Activated T-helper 1 cell treated with anti-CD3 and anti-CD28 coated beads, Interleukin-12 subunit alpha, Interleukin-12 subunit beta, Interleukin-2, Interleukin-4 antibody, amounts not matched to agents 30 ng/mL and 10 ng/mL and 1 ng/mL, durations not matched to agents 14 hours and 24 hours and 36 hours (primary cell): ENCODE measurements at regions of chr14 and their contacts with region 1.

Region 1: GRCh38 chr14:55026793-55027561 is at the starts of genes SOCS4 and WDHD1:
- DNase-seq: peak; percentile 98
- H3K4me3 Mint-ChIP-seq: peak within 1 kb of the TSS; percentile 88
- H3K27ac Mint-ChIP-seq: peak within 1 kb of the TSS; percentile 86
- H3K4me1 Mint-ChIP-seq: peaks cover 63% of the 10 kb centered on the region
- H3K27me3 Mint-ChIP-seq: no peaks in the 10 kb centered on the region
- total RNA-seq, gene SOCS4: 40.5 and 42.3 TPM in 2 replicates
- total RNA-seq, gene WDHD1: 53.8 and 54.1 TPM in 2 replicates

Region 2: DNA sequence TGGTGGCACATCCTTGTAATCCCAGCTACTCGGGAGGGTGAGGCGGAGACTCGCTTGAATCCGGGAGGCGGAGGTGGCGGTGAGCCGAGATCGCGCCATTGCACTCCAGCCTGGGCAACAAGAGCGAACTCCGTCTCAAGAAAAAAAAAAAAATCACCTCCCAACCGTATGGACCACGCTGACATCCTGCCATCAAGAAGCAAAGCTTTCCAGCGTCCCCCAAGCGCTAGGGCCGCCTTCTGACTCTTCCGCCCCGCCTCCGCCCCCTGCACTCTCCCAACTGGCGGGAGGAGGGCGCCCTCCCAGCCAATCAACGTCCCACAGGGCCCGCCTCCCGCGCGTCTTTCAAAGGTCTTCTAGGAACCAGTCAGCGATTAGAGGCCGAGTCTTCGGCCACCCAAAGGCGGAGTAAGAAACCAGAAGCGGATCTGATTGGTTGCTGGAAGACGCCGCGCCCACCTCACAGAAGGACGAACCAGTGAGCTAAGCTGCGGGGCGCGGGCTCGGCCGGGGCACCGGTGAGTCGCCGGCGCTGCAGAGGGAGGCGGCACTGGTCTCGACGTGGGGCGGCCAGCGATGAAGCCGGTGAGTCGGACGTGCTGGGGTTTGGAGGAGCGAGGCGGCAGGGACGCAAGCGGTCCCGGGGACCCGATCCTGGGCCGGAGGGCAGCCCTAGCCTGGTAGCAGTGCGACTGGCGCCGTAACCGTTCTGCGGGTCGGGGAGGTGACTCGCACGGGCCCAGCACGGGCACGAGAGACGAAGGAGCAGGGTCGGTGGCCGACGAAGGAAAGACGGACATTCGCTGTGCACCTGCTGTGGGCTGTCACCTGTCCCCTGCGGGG is 630.3 kb before region 1 on chr14 and contains the start of gene CDKN3:
- intact Hi-C with region 1: loop called (anchors 1 kb)
- DNase-seq: peak; percentile 98
- H3K4me3 Mint-ChIP-seq: peak within 1 kb of the TSS; percentile 81
- H3K27ac Mint-ChIP-seq: peak within 1 kb of the TSS; percentile 85
- H3K4me1 Mint-ChIP-seq: peaks cover 16% of the 10 kb centered on the region
- H3K27me3 Mint-ChIP-seq: peaks cover 3% of the 10 kb centered on the region
- total RNA-seq, gene CDKN3: 36.5 and 39.2 TPM in 2 replicates

Region 3: DNA sequence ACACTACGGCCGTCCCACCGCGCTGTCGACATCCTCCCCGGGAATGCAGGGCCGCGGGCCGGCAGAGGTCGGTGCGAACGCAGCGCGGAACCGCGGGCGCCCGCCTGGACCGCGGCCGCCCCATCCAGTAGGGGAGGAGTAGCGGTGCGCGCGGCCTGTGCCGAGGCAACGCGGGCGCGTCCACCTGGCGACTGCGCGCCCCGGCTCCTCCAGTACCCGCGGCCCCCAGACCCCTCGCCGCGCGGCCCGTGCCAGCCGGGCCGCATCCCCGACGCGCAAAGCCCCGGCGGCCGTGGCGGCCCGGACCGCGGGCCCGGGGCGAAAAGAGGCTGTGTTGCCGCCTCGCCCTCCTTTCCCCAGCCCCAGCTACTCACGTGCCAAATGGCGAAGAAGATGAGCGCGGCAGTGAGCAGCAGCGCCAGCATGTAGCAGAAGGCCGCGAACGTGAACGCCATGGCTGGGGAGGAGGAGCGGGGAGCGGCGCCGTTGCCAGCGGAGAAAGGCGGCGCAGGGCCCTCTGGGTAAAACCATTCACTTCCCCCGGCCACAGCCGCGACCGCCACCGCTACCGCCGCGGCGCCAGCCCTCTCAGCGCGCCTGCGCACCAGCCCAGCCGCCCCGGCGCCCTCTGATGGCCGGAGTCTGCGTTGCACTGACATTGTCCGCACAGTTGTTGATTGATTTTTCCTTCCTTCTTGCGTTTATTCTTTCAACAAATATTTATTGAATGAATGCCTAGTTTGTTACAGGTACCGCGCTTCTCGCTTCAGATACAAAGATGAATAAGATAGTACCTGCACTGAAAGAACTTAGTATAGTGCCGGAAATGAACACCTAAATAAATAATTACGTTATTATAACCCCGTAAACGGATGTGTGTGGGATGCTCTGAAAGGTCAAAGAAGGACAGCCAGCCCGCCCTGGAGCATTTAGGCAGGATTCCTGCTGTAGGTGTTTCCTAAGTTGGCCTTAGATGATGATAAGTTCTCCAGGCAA is 585.8 kb before region 1 on chr14 and contains the start of gene CNIH1:
- intact Hi-C with region 1: loop called (anchors 5 kb)
- DNase-seq: peak; percentile 91
- H3K4me3 Mint-ChIP-seq: peak within 1 kb of the TSS; percentile 89
- H3K27ac Mint-ChIP-seq: peak within 1 kb of the TSS; percentile 93
- H3K4me1 Mint-ChIP-seq: peaks cover 45% of the 10 kb centered on the region
- H3K27me3 Mint-ChIP-seq: peaks cover 2% of the 10 kb centered on the region
- total RNA-seq, gene CNIH1: 105 and 109 TPM in 2 replicates

Region 4: DNA sequence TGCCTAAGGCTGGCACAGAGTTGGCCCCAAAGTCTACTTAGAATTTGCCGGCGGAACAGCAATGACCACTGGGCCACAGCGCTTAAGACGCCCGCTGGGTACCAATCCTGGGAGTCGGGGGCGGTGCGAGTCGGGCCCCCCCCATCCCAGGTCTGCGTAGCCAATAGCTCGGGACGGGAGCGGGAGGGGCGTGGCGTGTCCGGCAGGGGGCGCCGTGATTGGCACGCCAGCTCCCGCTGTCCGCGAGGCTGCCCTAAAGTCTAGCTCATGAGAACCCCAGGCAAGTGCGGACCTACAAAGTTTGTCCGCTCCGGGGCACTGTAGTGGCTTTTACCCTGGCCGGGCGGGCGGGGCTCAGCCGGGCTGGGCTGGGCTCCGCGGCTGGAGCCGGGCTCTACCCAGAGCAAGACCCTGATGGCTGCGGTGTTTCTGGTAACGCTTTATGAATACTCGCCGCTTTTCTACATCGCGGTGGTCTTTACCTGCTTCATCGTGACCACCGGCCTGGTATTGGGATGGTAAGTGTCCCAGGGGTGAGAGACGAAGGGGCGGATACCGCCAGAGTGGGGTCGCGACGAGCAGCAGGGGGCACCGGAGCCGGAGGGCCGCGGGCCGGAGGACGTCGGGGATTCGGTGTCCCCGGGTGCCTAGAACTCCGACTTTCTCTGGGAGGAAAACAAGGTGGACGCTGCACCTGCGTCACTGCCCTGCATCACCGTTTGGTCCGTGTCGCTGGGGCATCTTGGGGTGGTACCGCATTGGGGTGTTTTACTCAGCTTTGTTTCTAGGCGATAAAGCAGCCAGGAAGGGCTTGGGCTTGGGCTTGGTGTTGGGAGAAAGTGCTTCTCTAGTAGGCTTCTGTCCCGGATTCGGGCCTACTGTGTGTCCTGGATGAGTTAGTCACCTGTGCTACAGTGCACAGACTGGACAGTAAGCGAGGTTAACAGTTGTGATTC is 517.2 kb before region 1 on chr14 and contains the start of gene CGRRF1:
- intact Hi-C with region 1: loop called (anchors 2 kb)
- DNase-seq: peak; percentile 94
- H3K4me3 Mint-ChIP-seq: peak within 1 kb of the TSS; percentile 95
- H3K27ac Mint-ChIP-seq: peak within 1 kb of the TSS; percentile 83
- H3K4me1 Mint-ChIP-seq: peaks cover 40% of the 10 kb centered on the region
- H3K27me3 Mint-ChIP-seq: peaks cover 8% of the 10 kb centered on the region
- total RNA-seq, gene CGRRF1: 8.5 and 13.2 TPM in 2 replicates

Region 5: GRCh38 chr14:54737132-54737711 is 289.8 kb before region 1 on chr14:
- intact Hi-C with region 1: no loop called
- DNase-seq: no peak
- H3K4me3 Mint-ChIP-seq: no peak overlapping the region
- H3K27ac Mint-ChIP-seq: peak overlapping the region; percentile 37
- H3K4me1 Mint-ChIP-seq: peaks cover 46% of the 10 kb centered on the region
- H3K27me3 Mint-ChIP-seq: peaks cover 35% of the 10 kb centered on the region

Region 6: DNA sequence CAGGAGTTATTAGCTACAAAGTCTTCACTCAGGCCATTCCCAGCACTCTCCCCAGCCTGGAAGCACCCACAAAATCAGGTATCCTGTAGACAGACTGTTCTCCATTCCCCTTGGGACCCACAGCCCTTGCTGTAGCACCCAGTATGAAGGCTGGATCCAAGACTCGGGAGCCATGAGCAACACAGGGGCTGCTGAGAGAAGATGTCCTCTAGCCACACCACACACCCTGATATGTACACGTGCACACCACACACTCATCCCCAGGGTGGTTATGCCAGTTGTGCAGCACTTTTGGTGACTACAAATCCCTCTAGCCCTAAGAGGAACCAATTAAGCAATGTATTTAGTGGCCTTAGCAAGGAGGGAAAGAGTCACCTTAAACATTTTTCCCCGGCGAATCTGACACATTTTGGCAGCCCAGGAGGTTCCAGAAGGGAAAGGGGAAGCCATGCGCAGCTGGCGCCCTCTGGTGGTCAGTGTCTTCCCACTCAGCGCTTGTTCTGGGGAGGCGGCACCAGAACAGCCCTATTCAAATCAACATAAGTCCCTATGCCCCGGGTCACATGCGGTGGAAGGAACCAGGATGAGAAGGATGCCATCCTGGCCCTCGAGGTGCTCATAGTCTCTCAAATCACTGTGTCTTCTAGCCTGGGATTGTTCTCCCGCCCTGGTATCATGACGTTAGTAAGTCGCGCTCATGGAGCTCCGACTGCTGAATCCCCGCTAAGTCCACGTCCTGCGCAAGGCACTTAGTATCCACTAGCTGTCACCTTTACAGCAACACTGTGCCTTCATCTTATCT is 221.3 kb before region 1 on chr14:
- intact Hi-C with region 1: no loop called
- DNase-seq: peak; percentile 48
- H3K4me3 Mint-ChIP-seq: no peak overlapping the region
- H3K27ac Mint-ChIP-seq: no peak overlapping the region
- H3K4me1 Mint-ChIP-seq: no peaks in the 10 kb centered on the region
- H3K27me3 Mint-ChIP-seq: peaks cover 10% of the 10 kb centered on the region

Region 7: GRCh38 chr14:54881235-54881760 is 145.7 kb before region 1 on chr14:
- intact Hi-C with region 1: loop called (anchors 2 kb)
- DNase-seq: peak; percentile 30
- H3K4me3 Mint-ChIP-seq: peak overlapping the region; percentile 86
- H3K27ac Mint-ChIP-seq: peak overlapping the region; percentile 94
- H3K4me1 Mint-ChIP-seq: peaks cover 53% of the 10 kb centered on the region
- H3K27me3 Mint-ChIP-seq: no peaks in the 10 kb centered on the region

Region 8: DNA sequence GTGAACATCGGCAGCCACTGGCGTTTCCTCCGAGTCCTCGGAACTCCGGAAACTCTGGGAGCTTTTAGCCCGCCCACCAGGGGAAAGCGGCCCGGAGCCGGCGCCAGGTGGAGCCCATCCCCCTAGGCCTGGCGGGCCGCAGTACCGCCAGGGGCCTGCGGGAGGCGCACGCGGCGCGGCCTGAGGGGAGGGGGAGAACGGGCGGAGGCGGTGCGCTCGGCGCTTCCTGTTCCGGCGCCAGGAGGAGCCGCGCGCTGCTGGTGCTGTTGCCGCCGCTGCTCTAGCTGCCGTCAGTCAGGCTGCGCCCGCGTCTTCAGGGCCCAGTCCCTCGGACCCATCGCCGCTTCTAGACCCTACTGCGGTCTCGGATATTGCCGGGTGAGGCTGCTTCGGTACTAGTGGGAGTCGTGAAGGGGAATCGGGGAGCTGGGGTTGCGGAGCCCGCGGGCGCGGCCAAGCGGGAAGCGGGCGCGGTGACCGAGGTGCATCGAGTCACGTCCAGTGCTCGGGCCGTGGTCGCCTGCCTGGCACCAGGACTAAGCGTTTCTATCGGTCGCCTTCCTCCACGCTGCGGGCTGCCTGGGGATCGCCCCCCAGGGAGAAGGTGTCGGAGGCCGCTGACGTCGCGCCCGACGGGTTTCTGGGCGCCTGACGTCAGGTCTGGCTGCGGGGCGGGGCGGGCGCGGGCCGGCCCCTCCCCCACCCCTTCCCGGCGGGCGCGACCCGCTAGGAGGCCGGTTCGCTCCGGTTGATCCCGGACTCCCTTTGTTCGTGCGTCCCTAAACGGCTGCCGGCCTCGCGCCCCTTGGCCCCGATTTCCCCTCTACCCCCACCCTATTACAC is 24.7 kb after region 1 on chr14 and contains the start of gene MAPK1IP1L:
- intact Hi-C with region 1: loop called (anchors 1 kb)
- DNase-seq: peak; percentile 90
- H3K4me3 Mint-ChIP-seq: peak within 1 kb of the TSS; percentile 94
- H3K27ac Mint-ChIP-seq: peak within 1 kb of the TSS; percentile 95
- H3K4me1 Mint-ChIP-seq: peaks cover 37% of the 10 kb centered on the region
- H3K27me3 Mint-ChIP-seq: no peaks in the 10 kb centered on the region
- total RNA-seq, gene MAPK1IP1L: 139 and 141 TPM in 2 replicates

Region 9: GRCh38 chr14:55411426-55412389 is 384.7 kb after region 1 on chr14 and contains the start of gene ATG14:
- intact Hi-C with region 1: loop called (anchors 1 kb)
- DNase-seq: peak; percentile 70
- H3K4me3 Mint-ChIP-seq: peak within 1 kb of the TSS; percentile 89
- H3K27ac Mint-ChIP-seq: peak within 1 kb of the TSS; percentile 85
- H3K4me1 Mint-ChIP-seq: peaks cover 29% of the 10 kb centered on the region
- H3K27me3 Mint-ChIP-seq: no peaks in the 10 kb centered on the region
- total RNA-seq, gene ATG14: 4.8 and 6.2 TPM in 2 replicates